ENCODE measurements at regions of chr13 and their contacts with region 1.

Region 1: GRCh38 chr13:37049810-37050209 is 9.7 kb downstream of the SUPT20H start:
- DNase-seq: no peak
- ATAC-seq: no peak
- H3K4me3 ChIP-seq: no peak overlapping the region
- H3K27ac ChIP-seq: no peak overlapping the region
- H3K4me1 ChIP-seq: no peaks in the 10 kb centered on the region
- H3K27me3 ChIP-seq: no peaks in the 10 kb centered on the region
- CTCF ChIP-seq: no peak
- EP300 ChIP-seq: no peak
- POLR2A ChIP-seq: no peak
- RAD21 ChIP-seq: no peak

Region 2: DNA sequence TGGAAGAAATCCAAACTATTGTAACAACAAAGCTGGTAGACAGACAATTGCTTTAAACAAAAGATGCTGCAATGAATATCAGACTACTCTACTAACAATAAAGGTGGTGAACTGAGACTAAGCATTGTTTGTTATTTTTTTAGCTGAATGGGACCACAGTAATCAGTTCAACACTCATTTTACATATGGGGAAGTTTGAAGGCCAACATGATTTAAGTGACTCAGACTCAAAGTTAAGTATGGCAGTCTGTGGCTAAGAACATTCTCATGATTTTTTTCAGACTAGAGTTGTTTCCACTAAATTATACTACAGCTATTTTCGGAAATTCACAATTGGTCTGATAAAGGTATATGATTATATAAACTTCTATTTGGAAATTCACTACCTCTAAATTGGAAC is 38.8 kb before region 1 on chr13:
- CTCF ChIA-PET with region 1: interaction called, 3 read pairs
- POLR2A ChIA-PET with region 1: no interaction called
- RAD21 ChIA-PET with region 1: no interaction called
- SMC1A ChIA-PET with region 1: interaction called, 3 read pairs
- in situ Hi-C with region 1: no loop called
- intact Hi-C with region 1: loop called (anchors 5 kb)
- DNase-seq: no peak
- ATAC-seq: no peak
- H3K4me3 ChIP-seq: no peak overlapping the region
- H3K27ac ChIP-seq: no peak overlapping the region
- H3K4me1 ChIP-seq: no peaks in the 10 kb centered on the region
- H3K27me3 ChIP-seq: no peaks in the 10 kb centered on the region
- CTCF ChIP-seq: no peak
- EP300 ChIP-seq: no peak
- POLR2A ChIP-seq: no peak
- RAD21 ChIP-seq: no peak

Region 3: GRCh38 chr13:37029617-37030016 is 20.2 kb before region 1 on chr13:
- CTCF ChIA-PET with region 1: interaction called, 5 read pairs
- POLR2A ChIA-PET with region 1: no interaction called
- RAD21 ChIA-PET with region 1: no interaction called
- SMC1A ChIA-PET with region 1: interaction called, 27 read pairs
- in situ Hi-C with region 1: no loop called
- intact Hi-C with region 1: no loop called
- DNase-seq: no peak
- ATAC-seq: no peak
- H3K4me3 ChIP-seq: no peak overlapping the region
- H3K27ac ChIP-seq: no peak overlapping the region
- H3K4me1 ChIP-seq: no peaks in the 10 kb centered on the region
- H3K27me3 ChIP-seq: no peaks in the 10 kb centered on the region
- CTCF ChIP-seq: no peak
- EP300 ChIP-seq: no peak
- POLR2A ChIP-seq: no peak
- RAD21 ChIP-seq: no peak